GM18951 (cell line): ENCODE measurements at regions of chr12 and their contacts with region 1.

Region 1: GRCh38 chr12:32478858-32479725 is 79.7 kb downstream of the FGD4 start:
- POLR2A ChIP-seq: no peak

Region 2: DNA sequence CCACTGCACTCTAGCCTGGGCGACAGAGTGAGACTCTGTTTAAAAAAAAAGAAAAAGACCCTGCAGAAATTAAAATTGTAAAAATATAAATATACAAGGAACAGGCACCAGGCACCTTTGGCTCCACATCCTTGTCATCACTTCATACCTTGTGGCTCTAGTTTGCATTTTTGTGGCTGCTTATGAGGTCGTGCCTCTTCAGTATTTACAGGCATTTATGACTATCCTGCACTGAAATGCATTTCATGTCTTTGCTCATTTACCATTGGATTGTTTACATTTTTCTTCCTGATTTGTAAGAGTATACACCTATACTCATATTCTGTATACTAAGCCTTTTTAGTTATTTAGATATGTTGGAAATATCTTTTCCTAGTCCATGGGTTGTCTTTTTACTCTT is 352.4 kb before region 1 on chr12:
- in situ Hi-C with region 1: no loop called
- POLR2A ChIP-seq: no peak

Region 3: GRCh38 chr12:32737715-32738114 is 258.6 kb after region 1 on chr12:
- in situ Hi-C with region 1: loop called (anchors 10 kb)
- POLR2A ChIP-seq: no peak